CD4-positive, alpha-beta T cell (primary cell): ENCODE measurements at regions of chr2 and their contacts with region 1.

Region 1: GRCh38 chr2:197310271-197310985 is at the start of gene ANKRD44:
- DNase-seq: peak; percentile 81 to 96 (median 86)
- ATAC-seq: peak; percentile 77
- H3K4me3 ChIP-seq: peak within 1 kb of the TSS; percentile 94
- H3K4me3 Mint-ChIP-seq: peak within 1 kb of the TSS; percentile 95
- H3K27ac ChIP-seq: peak within 1 kb of the TSS; percentile 85 to 96
- H3K27ac Mint-ChIP-seq: peak within 1 kb of the TSS; percentile 95
- H3K4me1 ChIP-seq: peaks cover 46% of the 10 kb centered on the region
- H3K4me1 Mint-ChIP-seq: peaks cover 69% of the 10 kb centered on the region
- H3K27me3 ChIP-seq: no peaks in the 10 kb centered on the region
- H3K27me3 Mint-ChIP-seq: no peaks in the 10 kb centered on the region
- CTCF ChIP-seq: no peak
- total RNA-seq, gene ANKRD44: 170 to 186 TPM

Region 2: GRCh38 chr2:196601430-196602306 is 708.8 kb before region 1 on chr2:
- CTCF ChIA-PET with region 1: no interaction called
- POLR2A ChIA-PET with region 1: no interaction called
- intact Hi-C with region 1: no loop called
- DNase-seq: no peak
- ATAC-seq: no peak
- H3K4me3 ChIP-seq: no peak overlapping the region
- H3K4me3 Mint-ChIP-seq: no peak overlapping the region
- H3K27ac ChIP-seq: no peak overlapping the region
- H3K27ac Mint-ChIP-seq: no peak overlapping the region
- H3K4me1 ChIP-seq: no peaks in the 10 kb centered on the region
- H3K4me1 Mint-ChIP-seq: no peaks in the 10 kb centered on the region
- H3K27me3 ChIP-seq: no peaks in the 10 kb centered on the region
- H3K27me3 Mint-ChIP-seq: peaks cover 47% of the 10 kb centered on the region
- CTCF ChIP-seq: no peak

Region 3: GRCh38 chr2:196902828-196903227 is 407.6 kb before region 1 on chr2:
- CTCF ChIA-PET with region 1: no interaction called
- POLR2A ChIA-PET with region 1: no interaction called
- intact Hi-C with region 1: no loop called
- DNase-seq: no peak
- ATAC-seq: no peak
- H3K4me3 ChIP-seq: no peak overlapping the region
- H3K4me3 Mint-ChIP-seq: no peak overlapping the region
- H3K27ac ChIP-seq: no peak overlapping the region
- H3K27ac Mint-ChIP-seq: no peak overlapping the region
- H3K4me1 ChIP-seq: no peaks in the 10 kb centered on the region
- H3K4me1 Mint-ChIP-seq: no peaks in the 10 kb centered on the region
- H3K27me3 ChIP-seq: no peaks in the 10 kb centered on the region
- H3K27me3 Mint-ChIP-seq: no peaks in the 10 kb centered on the region
- CTCF ChIP-seq: no peak

Region 4: GRCh38 chr2:197011799-197012641 is 298.4 kb before region 1 on chr2:
- CTCF ChIA-PET with region 1: no interaction called
- POLR2A ChIA-PET with region 1: no interaction called
- intact Hi-C with region 1: no loop called
- DNase-seq: peak in 6 of 14 experiments; percentile 11 to 69 (median 33)
- ATAC-seq: peak; percentile 56
- H3K4me3 ChIP-seq: no peak overlapping the region
- H3K4me3 Mint-ChIP-seq: no peak overlapping the region
- H3K27ac ChIP-seq: no peak overlapping the region
- H3K27ac Mint-ChIP-seq: peak overlapping the region; percentile 55
- H3K4me1 ChIP-seq: peaks cover 2% of the 10 kb centered on the region
- H3K4me1 Mint-ChIP-seq: peaks cover 8% of the 10 kb centered on the region
- H3K27me3 ChIP-seq: no peaks in the 10 kb centered on the region
- H3K27me3 Mint-ChIP-seq: no peaks in the 10 kb centered on the region
- CTCF ChIP-seq: peak; percentile 75

Region 5: DNA sequence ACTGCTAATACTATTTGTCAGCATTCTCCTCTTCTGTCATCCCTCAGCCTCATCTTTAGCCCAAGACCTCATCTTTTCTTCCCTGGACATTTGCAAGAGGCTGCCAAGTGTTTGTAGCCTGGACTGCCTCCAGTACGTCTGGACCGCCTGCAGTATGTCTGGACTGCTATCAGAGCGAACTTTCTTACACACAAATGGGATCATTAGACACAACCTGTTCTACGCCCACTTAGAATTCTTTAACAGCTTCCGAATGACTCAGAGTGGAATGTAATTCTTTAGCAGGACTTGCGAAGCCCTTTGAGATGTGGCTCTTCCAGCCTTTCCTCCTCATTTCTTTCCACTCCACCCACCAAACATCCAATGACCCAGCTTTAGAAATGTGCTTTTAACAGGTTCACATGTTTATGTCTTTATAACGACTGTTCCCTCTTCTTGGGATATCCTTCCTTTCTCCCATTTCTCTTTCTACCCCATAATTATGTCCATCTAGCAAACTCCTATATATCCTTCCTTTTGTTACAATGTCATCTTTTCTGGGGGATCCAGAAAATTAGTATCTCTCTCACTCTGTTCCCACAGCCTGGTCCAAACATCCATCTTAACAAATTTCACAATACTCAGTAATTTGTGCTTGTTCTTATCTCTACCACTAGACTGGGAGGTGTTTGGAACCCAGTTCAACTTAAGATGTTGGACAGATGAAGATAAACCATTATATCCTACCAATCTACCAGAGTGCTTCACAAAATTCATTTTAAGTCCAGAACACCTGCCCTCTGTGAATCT is 212.7 kb before region 1 on chr2:
- CTCF ChIA-PET with region 1: no interaction called
- POLR2A ChIA-PET with region 1: no interaction called
- intact Hi-C with region 1: no loop called
- DNase-seq: no peak
- ATAC-seq: no peak
- H3K4me3 ChIP-seq: no peak overlapping the region
- H3K4me3 Mint-ChIP-seq: no peak overlapping the region
- H3K27ac ChIP-seq: no peak overlapping the region
- H3K27ac Mint-ChIP-seq: peak overlapping the region; percentile 45
- H3K4me1 ChIP-seq: no peaks in the 10 kb centered on the region
- H3K4me1 Mint-ChIP-seq: peaks cover 20% of the 10 kb centered on the region
- H3K27me3 ChIP-seq: no peaks in the 10 kb centered on the region
- H3K27me3 Mint-ChIP-seq: no peaks in the 10 kb centered on the region
- CTCF ChIP-seq: no peak

Region 6: DNA sequence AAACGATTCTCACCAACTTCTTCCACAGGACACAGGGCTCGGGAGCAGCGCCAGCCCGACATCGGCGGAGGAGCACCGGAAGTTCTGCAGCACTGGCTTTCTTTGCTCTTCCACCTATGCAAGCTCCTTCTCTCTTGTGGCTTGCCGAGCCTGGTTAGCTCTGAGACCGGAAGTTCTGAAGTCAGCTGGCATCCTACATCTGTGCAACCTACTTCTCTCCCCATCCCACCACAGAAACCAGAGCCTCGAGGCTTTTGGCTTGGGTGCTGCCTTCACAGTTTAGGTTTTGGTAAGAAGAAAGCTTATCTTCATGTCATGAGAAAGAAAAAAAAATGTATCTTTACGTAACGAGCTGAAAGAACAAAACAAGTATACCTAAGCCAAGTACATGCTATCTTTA is 111.5 kb before region 1 on chr2:
- CTCF ChIA-PET with region 1: interaction called, 11 read pairs
- POLR2A ChIA-PET with region 1: interaction called, 754 read pairs
- intact Hi-C with region 1: loop called in 1 of 2 experiments (anchors 2 kb)
- DNase-seq: peak; percentile 75 to 98 (median 83)
- ATAC-seq: peak; percentile 82
- H3K4me3 ChIP-seq: peak overlapping the region; percentile 57
- H3K4me3 Mint-ChIP-seq: peak overlapping the region; percentile 89
- H3K27ac ChIP-seq: peak overlapping the region; percentile 77 to 84
- H3K27ac Mint-ChIP-seq: peak overlapping the region; percentile 98
- H3K4me1 ChIP-seq: peaks cover 70% of the 10 kb centered on the region
- H3K4me1 Mint-ChIP-seq: peaks cover 92% of the 10 kb centered on the region
- H3K27me3 ChIP-seq: no peaks in the 10 kb centered on the region
- H3K27me3 Mint-ChIP-seq: no peaks in the 10 kb centered on the region
- CTCF ChIP-seq: no peak

Region 7: DNA sequence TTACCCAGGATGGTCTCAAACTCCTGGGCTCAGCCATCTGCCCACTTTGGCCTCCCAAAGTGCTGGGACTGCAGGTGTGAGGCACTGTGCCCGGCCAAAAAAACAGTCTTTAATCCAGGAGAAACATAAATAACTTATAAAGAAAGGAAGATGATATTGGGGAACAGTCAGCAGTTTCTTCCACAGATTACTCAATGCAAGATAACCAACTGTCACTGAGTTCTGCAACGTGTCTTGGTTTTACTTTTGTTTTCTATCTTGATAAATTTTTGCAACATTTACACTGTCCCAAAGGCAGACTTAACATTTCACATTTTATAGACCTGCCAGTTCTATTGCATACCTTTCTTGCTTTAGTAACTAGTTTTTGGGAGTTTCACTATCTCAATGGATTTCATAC is 71.0 kb before region 1 on chr2:
- CTCF ChIA-PET with region 1: interaction called, 5 read pairs
- POLR2A ChIA-PET with region 1: interaction called, 164 read pairs
- intact Hi-C with region 1: loop called (anchors 2 kb)
- DNase-seq: peak in 3 of 14 experiments; percentile 49 to 65 (median 51)
- ATAC-seq: peak; percentile 32
- H3K4me3 ChIP-seq: peak overlapping the region; percentile 32
- H3K4me3 Mint-ChIP-seq: peak overlapping the region; percentile 88
- H3K27ac ChIP-seq: peak overlapping the region; percentile 74 to 75
- H3K27ac Mint-ChIP-seq: peak overlapping the region; percentile 91
- H3K4me1 ChIP-seq: peaks cover 77% of the 10 kb centered on the region
- H3K4me1 Mint-ChIP-seq: peaks cover 95% of the 10 kb centered on the region
- H3K27me3 ChIP-seq: no peaks in the 10 kb centered on the region
- H3K27me3 Mint-ChIP-seq: no peaks in the 10 kb centered on the region
- CTCF ChIP-seq: no peak

Region 8: GRCh38 chr2:197261808-197262226 is 48.6 kb before region 1 on chr2:
- CTCF ChIA-PET with region 1: interaction called, 6 read pairs
- POLR2A ChIA-PET with region 1: interaction called, 58 read pairs
- intact Hi-C with region 1: loop called (anchors 2 to 5 kb)
- DNase-seq: peak in 2 of 14 experiments; percentile 49 to 52
- ATAC-seq: peak; percentile 38
- H3K4me3 ChIP-seq: no peak overlapping the region
- H3K4me3 Mint-ChIP-seq: peak overlapping the region; percentile 66
- H3K27ac ChIP-seq: peak overlapping the region; percentile 54 to 59
- H3K27ac Mint-ChIP-seq: peak overlapping the region; percentile 78
- H3K4me1 ChIP-seq: peaks cover 69% of the 10 kb centered on the region
- H3K4me1 Mint-ChIP-seq: peaks cover 85% of the 10 kb centered on the region
- H3K27me3 ChIP-seq: no peaks in the 10 kb centered on the region
- H3K27me3 Mint-ChIP-seq: no peaks in the 10 kb centered on the region
- CTCF ChIP-seq: no peak

Region 9: GRCh38 chr2:197286805-197287598 is 23.4 kb before region 1 on chr2:
- CTCF ChIA-PET with region 1: interaction called, 4 read pairs
- POLR2A ChIA-PET with region 1: interaction called, 185 read pairs
- intact Hi-C with region 1: loop called in 1 of 2 experiments (anchors 2 kb)
- DNase-seq: peak in 7 of 14 experiments; percentile 25 to 88 (median 61)
- ATAC-seq: peak; percentile 96
- H3K4me3 ChIP-seq: no peak overlapping the region
- H3K4me3 Mint-ChIP-seq: peak overlapping the region; percentile 84
- H3K27ac ChIP-seq: peak overlapping the region; percentile 43 to 60
- H3K27ac Mint-ChIP-seq: peak overlapping the region; percentile 86
- H3K4me1 ChIP-seq: peaks cover 70% of the 10 kb centered on the region
- H3K4me1 Mint-ChIP-seq: peaks cover 85% of the 10 kb centered on the region
- H3K27me3 ChIP-seq: no peaks in the 10 kb centered on the region
- H3K27me3 Mint-ChIP-seq: no peaks in the 10 kb centered on the region
- CTCF ChIP-seq: no peak

Region 10: GRCh38 chr2:197356136-197356535 is 45.7 kb after region 1 on chr2:
- CTCF ChIA-PET with region 1: no interaction called
- POLR2A ChIA-PET with region 1: interaction called, 6 read pairs
- intact Hi-C with region 1: loop called in 1 of 2 experiments (anchors 5 kb)
- DNase-seq: peak in 3 of 14 experiments; percentile 25 to 54 (median 47)
- ATAC-seq: peak; percentile 78
- H3K4me3 ChIP-seq: no peak overlapping the region
- H3K4me3 Mint-ChIP-seq: no peak overlapping the region
- H3K27ac ChIP-seq: no peak overlapping the region
- H3K27ac Mint-ChIP-seq: no peak overlapping the region
- H3K4me1 ChIP-seq: no peaks in the 10 kb centered on the region
- H3K4me1 Mint-ChIP-seq: peaks cover 27% of the 10 kb centered on the region
- H3K27me3 ChIP-seq: no peaks in the 10 kb centered on the region
- H3K27me3 Mint-ChIP-seq: no peaks in the 10 kb centered on the region
- CTCF ChIP-seq: peak; percentile 56